IMR-90 (cell line): ENCODE measurements at regions of chr12 and their contacts with region 1.

Region 1: GRCh38 chr12:66860752-66861750 is 182.2 kb upstream of the GRIP1 start:
- DNase-seq: peak; percentile 53
- ATAC-seq: peak; percentile 84
- H3K4me3 ChIP-seq: no peak overlapping the region
- H3K27ac ChIP-seq: no peak overlapping the region
- H3K4me1 ChIP-seq: no peaks in the 10 kb centered on the region
- H3K27me3 ChIP-seq: no peaks in the 10 kb centered on the region
- CTCF ChIP-seq: peak; percentile 90
- POLR2A ChIP-seq: no peak
- RAD21 ChIP-seq: peak; percentile 51

Region 2: GRCh38 chr12:66688846-66689439 is 172.1 kb before region 1 on chr12:
- CTCF ChIA-PET with region 1: no interaction called
- POLR2A ChIA-PET with region 1: no interaction called
- dilution Hi-C with region 1: no loop called
- in situ Hi-C with region 1: no loop called
- intact Hi-C with region 1: loop called (anchors 1 kb)
- DNase-seq: peak; percentile 1
- ATAC-seq: no peak; the same call in 1 of the 2 replicates
- H3K4me3 ChIP-seq: no peak overlapping the region
- H3K27ac ChIP-seq: no peak overlapping the region
- H3K4me1 ChIP-seq: no peaks in the 10 kb centered on the region
- H3K27me3 ChIP-seq: no peaks in the 10 kb centered on the region
- CTCF ChIP-seq: peak; percentile 27; the same call in 1 of the 2 replicates
- POLR2A ChIP-seq: no peak
- RAD21 ChIP-seq: peak; percentile 39; the same call in 1 of the 2 replicates

Region 3: DNA sequence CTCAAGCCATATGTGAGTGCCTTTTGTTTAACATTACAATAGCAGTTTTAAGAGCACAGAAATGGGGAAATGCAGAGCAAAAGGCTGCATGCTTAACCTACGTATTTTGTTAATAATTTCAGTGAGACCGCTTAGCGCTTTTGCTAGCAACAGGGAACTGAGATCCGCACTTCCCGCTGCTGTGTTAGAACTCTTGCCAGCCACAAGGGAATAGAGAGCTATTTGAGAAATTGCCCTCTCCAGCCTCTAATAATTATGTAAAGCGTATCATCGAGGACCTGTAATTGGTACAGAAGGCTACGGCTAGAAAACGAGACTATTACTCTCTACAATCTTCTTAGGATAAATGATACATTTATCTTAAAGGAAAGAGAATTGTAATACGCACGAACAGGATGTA is 23.0 kb after region 1 on chr12:
- CTCF ChIA-PET with region 1: no interaction called
- POLR2A ChIA-PET with region 1: no interaction called
- dilution Hi-C with region 1: no loop called
- in situ Hi-C with region 1: no loop called
- intact Hi-C with region 1: loop called (anchors 1 kb)
- DNase-seq: no peak
- ATAC-seq: no peak
- H3K4me3 ChIP-seq: no peak overlapping the region
- H3K27ac ChIP-seq: no peak overlapping the region
- H3K4me1 ChIP-seq: no peaks in the 10 kb centered on the region
- H3K27me3 ChIP-seq: no peaks in the 10 kb centered on the region
- CTCF ChIP-seq: no peak
- POLR2A ChIP-seq: no peak
- RAD21 ChIP-seq: no peak